Sigmoid colon (tissue), 7 donors: ENCODE measurements at regions of chr11 and their contacts with region 1.

Region 1: GRCh38 chr11:6315811-6316425 is 4.4 kb downstream of the CAVIN3 start:
- DNase-seq: peak; percentile 83
- H3K4me3 ChIP-seq: peak overlapping the region in 1 of 4 donors; percentile 6
- H3K27ac ChIP-seq: peak overlapping the region in 3 of 4 donors; percentile 99
- H3K4me1 ChIP-seq: peaks cover 0 to 33% (median 26%) of the 10 kb centered on the region in 4 donors
- H3K27me3 ChIP-seq: no peaks in the 10 kb centered on the region
- CTCF ChIP-seq: peak; percentile 75 to 94 (median 82)
- EP300 ChIP-seq: no peak
- POLR2A ChIP-seq: no peak

Region 2: DNA sequence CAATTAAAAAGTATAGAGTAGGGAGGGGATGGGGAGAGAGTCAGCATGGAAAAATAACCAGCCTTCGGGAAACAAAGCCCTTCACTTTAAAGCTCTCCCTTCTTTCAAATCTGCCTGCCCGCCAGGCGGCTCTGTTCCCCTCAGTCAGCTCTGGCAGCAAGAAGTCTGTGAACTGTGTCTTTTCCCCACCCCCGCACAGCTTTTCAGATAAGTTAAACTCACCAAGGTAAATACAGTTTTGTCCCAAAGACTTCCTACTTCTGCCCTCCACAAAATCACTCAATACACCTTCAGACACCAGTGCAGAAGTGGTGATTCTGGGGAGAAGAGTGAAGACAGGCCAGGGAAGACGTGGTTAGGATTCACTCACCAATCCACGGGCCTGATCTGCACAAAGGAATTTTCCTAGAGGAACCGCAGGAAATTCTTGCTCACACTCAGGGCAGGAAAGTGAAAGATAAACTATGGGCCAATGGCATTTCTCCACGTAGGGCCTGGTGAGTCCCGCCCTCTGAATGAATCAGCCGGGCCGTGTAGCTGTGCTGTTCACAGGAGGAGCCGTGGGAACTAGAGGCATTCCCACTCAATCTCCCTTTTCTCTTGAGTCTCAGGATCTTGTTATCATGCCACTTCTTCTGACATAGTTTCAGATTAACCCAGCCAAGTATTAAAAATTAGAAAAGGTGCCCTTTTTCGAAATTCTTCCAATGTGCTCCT is 631.1 kb before region 1 on chr11 and contains the start of gene TRIM5:
- intact Hi-C with region 1: loop called (anchors 5 kb)
- DNase-seq: peak; percentile 95
- H3K4me3 ChIP-seq: peak within 1 kb of the TSS; percentile 24 to 53 (median 49)
- H3K27ac ChIP-seq: peak within 1 kb of the TSS; percentile 89 to 93 (median 90)
- H3K4me1 ChIP-seq: peaks cover 0 to 35% (median 26%) of the 10 kb centered on the region in 4 donors
- H3K27me3 ChIP-seq: no peaks in the 10 kb centered on the region
- CTCF ChIP-seq: peak; percentile 20 to 56 (median 50)
- EP300 ChIP-seq: no peak
- POLR2A ChIP-seq: peak in 1 of 2 donors; percentile 31
- total RNA-seq, gene TRIM5: 11.7 to 29.9 (median 14.3) TPM

Region 3: DNA sequence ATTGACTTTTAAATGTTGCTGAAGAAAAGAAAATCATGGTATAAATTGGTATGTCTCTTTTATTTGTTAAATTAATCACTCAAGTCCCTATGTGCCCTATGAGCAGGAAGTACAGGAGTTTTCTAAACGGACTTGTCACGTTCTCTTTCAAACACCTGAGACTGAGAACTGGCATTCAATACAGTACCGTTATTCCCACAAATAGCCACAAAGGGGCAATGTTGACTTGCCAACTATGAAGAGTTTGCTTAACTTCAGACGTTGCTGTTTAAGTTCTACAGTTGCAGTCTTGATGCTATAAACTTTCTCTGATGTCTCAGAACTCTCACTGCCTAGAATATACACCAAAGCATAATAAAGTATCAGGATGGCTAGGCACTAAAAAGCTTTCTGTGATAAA is 293.0 kb before region 1 on chr11:
- intact Hi-C with region 1: loop called (anchors 5 kb)
- DNase-seq: no peak
- H3K4me3 ChIP-seq: no peak overlapping the region
- H3K27ac ChIP-seq: no peak overlapping the region
- H3K4me1 ChIP-seq: no peaks in the 10 kb centered on the region
- H3K27me3 ChIP-seq: no peaks in the 10 kb centered on the region
- CTCF ChIP-seq: peak in 3 of 4 experiments; percentile 22 to 45 (median 42)
- EP300 ChIP-seq: no peak
- POLR2A ChIP-seq: no peak

Region 4: GRCh38 chr11:6234387-6235107 is 81.4 kb before region 1 on chr11 and contains the start of gene FHIP1B:
- intact Hi-C with region 1: loop called (anchors 2 kb)
- DNase-seq: peak; percentile 100
- H3K4me3 ChIP-seq: peak within 1 kb of the TSS; percentile 48 to 90 (median 70)
- H3K27ac ChIP-seq: peak within 1 kb of the TSS; percentile 85 to 91 (median 87)
- H3K4me1 ChIP-seq: peaks cover 0 to 27% (median 15%) of the 10 kb centered on the region in 4 donors
- H3K27me3 ChIP-seq: no peaks in the 10 kb centered on the region
- CTCF ChIP-seq: no peak
- EP300 ChIP-seq: no peak
- POLR2A ChIP-seq: peak; percentile 16 to 47
- total RNA-seq, gene FHIP1B: 21.6 to 66.0 (median 36.6) TPM

Region 5: DNA sequence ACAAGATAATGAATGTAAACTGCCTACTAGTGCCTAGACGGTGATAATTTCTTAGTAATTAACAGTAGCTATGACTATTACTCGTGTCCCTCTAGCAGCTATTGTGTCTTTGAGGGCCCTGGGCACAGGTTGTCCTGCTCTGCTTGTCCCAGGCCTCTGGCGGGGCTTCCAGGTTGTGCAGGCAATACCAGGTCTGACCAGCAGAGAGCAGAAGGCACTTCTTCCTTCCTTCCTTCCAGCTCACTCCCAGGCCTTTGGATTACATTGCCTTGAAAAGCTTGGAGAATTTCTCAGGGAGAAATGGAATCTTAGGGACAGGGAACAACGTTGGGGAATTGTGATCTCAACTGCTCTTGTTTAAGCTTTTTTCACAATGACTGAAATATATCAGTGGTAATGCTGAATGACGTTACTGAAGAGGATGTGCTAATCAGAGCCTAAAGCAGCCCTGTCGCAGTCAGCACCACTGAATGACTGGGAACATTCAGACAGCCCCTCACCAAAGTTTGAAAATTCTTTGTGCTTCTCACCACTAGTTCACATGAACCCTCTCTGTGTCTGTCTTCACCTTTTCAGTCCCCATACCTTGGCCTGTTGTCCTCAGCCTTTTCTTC is 64.7 kb before region 1 on chr11:
- intact Hi-C with region 1: loop called (anchors 1 kb)
- DNase-seq: peak; percentile 86
- H3K4me3 ChIP-seq: no peak overlapping the region
- H3K27ac ChIP-seq: peak overlapping the region in 3 of 4 donors; percentile 67 to 79 (median 74)
- H3K4me1 ChIP-seq: peaks cover 0 to 23% (median 15%) of the 10 kb centered on the region in 4 donors
- H3K27me3 ChIP-seq: no peaks in the 10 kb centered on the region
- CTCF ChIP-seq: peak; percentile 86 to 96 (median 87)
- EP300 ChIP-seq: no peak
- POLR2A ChIP-seq: no peak

Region 6: GRCh38 chr11:6362873-6363678 is 47.2 kb after region 1 on chr11:
- intact Hi-C with region 1: no loop called
- DNase-seq: peak; percentile 90
- H3K4me3 ChIP-seq: no peak overlapping the region
- H3K27ac ChIP-seq: no peak overlapping the region
- H3K4me1 ChIP-seq: peaks cover 0 to 7% (median 2%) of the 10 kb centered on the region in 4 donors
- H3K27me3 ChIP-seq: no peaks in the 10 kb centered on the region
- CTCF ChIP-seq: peak; percentile 49 to 85 (median 64)
- EP300 ChIP-seq: no peak
- POLR2A ChIP-seq: no peak

Region 7: GRCh38 chr11:6505577-6506240 is 189.8 kb after region 1 on chr11:
- intact Hi-C with region 1: no loop called
- DNase-seq: no peak
- H3K4me3 ChIP-seq: no peak overlapping the region
- H3K27ac ChIP-seq: peak overlapping the region; percentile 23 to 55 (median 46)
- H3K4me1 ChIP-seq: peaks cover 0 to 11% (median 3%) of the 10 kb centered on the region in 4 donors
- H3K27me3 ChIP-seq: no peaks in the 10 kb centered on the region
- CTCF ChIP-seq: peak; percentile 32 to 78 (median 65)
- EP300 ChIP-seq: no peak
- POLR2A ChIP-seq: no peak